Gastrocnemius medialis (tissue), 4 donors: ENCODE measurements at regions of chr16 and their contacts with region 1.

Region 1: DNA sequence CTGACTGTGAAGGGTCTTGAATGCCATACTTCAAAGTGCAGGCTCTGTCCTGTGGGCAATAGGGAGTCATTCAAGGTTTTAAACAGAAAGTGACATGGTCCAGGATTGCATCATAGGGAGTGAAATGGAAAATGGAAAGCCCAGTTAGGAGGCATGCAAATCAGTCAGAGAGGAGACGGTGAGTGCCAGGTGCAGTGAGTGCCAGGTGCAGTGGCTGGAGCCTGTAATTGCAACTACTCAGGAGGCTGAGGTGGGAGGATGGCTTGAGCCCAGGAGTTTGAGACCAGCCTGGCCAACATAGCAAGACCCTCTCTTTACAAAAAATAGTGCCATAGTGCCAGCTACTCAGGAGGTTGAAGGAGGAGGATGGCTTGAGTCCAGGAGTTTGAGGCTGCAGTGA is 35.2 kb upstream of the SIAH1 start:
- DNase-seq: no peak
- ATAC-seq: no peak
- H3K4me3 ChIP-seq: no peak overlapping the region
- H3K27ac ChIP-seq: no peak overlapping the region
- H3K4me1 ChIP-seq: no peaks in the 10 kb centered on the region
- H3K27me3 ChIP-seq: no peaks in the 10 kb centered on the region
- CTCF ChIP-seq: no peak
- POLR2A ChIP-seq: no peak

Region 2: DNA sequence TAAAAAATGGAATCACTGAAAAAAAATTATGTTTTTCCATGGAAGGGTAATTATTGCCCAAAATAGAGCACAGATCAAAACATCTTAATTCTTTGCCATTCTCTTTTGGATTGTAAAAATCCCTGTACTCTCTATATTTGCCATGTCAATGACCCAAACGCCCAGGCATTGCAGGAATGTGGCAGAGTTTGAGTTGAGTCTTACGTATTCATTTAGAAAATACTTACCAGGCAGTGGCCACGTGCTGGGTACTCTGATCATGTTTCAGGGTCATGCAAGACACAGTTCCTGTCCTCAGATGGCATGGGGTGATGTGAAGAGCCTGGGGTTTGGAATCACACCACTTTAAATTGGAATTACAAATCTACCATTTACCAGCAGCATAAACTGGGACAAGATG is 532.3 kb before region 1 on chr16:
- in situ Hi-C with region 1: no loop called
- intact Hi-C with region 1: loop called (anchors 5 kb)
- DNase-seq: no peak
- ATAC-seq: peak in 1 of 2 donors; percentile 39
- H3K4me3 ChIP-seq: no peak overlapping the region
- H3K27ac ChIP-seq: no peak overlapping the region
- H3K4me1 ChIP-seq: no peaks in the 10 kb centered on the region
- H3K27me3 ChIP-seq: no peaks in the 10 kb centered on the region
- CTCF ChIP-seq: no peak
- POLR2A ChIP-seq: no peak